ENCODE measurements at regions of chr4 and their contacts with region 1.

Region 1: GRCh38 chr4:42768125-42768748 is 111.3 kb upstream of the ATP8A1 start:
- DNase-seq: peak; percentile 48
- ATAC-seq: no peak
- H3K4me3 Mint-ChIP-seq: no peak overlapping the region
- H3K27ac Mint-ChIP-seq: no peak overlapping the region
- H3K4me1 Mint-ChIP-seq: no peaks in the 10 kb centered on the region
- H3K27me3 Mint-ChIP-seq: peaks cover 8% of the 10 kb centered on the region

Region 2: GRCh38 chr4:42750091-42750490 is 18.1 kb before region 1 on chr4:
- CTCF ChIA-PET with region 1: no interaction called
- POLR2A ChIA-PET with region 1: no interaction called
- intact Hi-C with region 1: loop called in 1 of 2 experiments (anchors 2 kb)
- DNase-seq: peak; percentile 27
- ATAC-seq: peak; percentile 47
- H3K4me3 Mint-ChIP-seq: no peak overlapping the region
- H3K27ac Mint-ChIP-seq: no peak overlapping the region
- H3K4me1 Mint-ChIP-seq: peaks cover 2% of the 10 kb centered on the region
- H3K27me3 Mint-ChIP-seq: no peaks in the 10 kb centered on the region